ENCODE measurements at regions of chr14 and their contacts with region 1.

Region 1: DNA sequence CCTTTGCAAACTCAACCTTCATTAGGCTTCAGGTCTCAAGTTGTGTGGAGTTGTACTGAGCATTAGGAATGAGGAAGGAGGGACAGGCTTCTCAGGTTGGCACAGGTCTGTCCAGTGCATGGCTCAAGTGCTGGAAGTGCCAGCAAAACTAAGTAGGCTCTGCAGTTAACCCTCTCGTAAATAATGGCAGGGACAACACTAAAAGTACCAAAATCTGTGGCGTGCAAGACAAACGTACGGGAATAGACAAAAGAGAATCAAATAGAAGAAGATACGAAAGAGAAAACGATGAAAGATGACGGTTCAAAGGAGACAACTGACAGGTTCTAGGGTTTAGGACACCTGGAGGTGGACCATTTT is 612 bp downstream of the TRAPPC6B start:
- DNase-seq: no peak
- H3K4me3 Mint-ChIP-seq: peak overlapping the region; percentile 84
- H3K27ac Mint-ChIP-seq: peak overlapping the region; percentile 98
- H3K4me1 Mint-ChIP-seq: peaks cover 59% of the 10 kb centered on the region
- H3K27me3 Mint-ChIP-seq: no peaks in the 10 kb centered on the region

Region 2: DNA sequence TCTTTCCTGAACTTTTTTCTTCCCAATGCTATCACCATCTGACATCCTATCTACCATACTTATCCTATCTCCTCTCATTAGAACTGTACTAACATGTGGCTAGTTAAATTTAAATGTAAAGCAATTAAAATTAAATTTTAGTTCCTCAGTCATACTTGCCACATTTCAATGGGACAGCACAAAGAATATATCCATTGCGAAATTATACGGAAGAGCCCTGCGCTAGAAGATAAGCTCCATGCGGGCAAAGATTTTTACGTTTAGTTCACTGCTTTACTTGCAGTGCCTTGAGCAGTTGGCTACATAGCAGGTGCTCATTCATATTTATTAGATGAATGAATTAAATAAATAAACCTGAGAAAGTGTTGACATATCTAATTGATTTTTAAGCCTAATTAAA is 99.6 kb before region 1 on chr14:
- CTCF ChIA-PET with region 1: no interaction called
- POLR2A ChIA-PET with region 1: no interaction called
- DNase-seq: no peak
- H3K4me3 Mint-ChIP-seq: no peak overlapping the region
- H3K27ac Mint-ChIP-seq: no peak overlapping the region
- H3K4me1 Mint-ChIP-seq: peaks cover 1% of the 10 kb centered on the region
- H3K27me3 Mint-ChIP-seq: no peaks in the 10 kb centered on the region

Region 3: GRCh38 chr14:39102969-39103957 is 66.3 kb before region 1 on chr14 and contains the start of gene SEC23A:
- CTCF ChIA-PET with region 1: interaction called, 6 read pairs
- POLR2A ChIA-PET with region 1: interaction called, 38 read pairs
- DNase-seq: peak; percentile 88
- H3K4me3 Mint-ChIP-seq: peak within 1 kb of the TSS; percentile 97
- H3K27ac Mint-ChIP-seq: peak within 1 kb of the TSS; percentile 91
- H3K4me1 Mint-ChIP-seq: peaks cover 47% of the 10 kb centered on the region
- H3K27me3 Mint-ChIP-seq: no peaks in the 10 kb centered on the region
- total RNA-seq, gene SEC23A: 59.7 to 69.0 TPM

Region 4: DNA sequence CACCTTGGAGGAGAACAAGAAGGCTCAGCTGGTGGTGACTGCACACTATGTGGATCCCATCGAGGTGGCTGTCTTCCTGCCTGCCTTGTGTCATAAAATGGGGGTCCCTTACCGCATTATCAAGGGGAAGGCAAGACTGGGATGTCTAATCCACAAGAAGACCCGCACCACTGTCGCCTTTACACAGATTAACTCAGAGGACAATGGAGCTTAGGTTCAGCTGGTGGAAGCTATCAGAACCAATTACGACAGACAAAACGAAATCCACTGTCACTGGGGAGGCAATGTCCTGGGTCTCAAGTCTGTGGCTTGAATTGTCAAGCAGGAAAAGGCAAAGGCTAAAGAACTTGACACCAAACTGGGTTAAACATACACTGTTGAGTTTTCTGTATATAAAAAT is 12.0 kb before region 1 on chr14:
- CTCF ChIA-PET with region 1: no interaction called
- POLR2A ChIA-PET with region 1: interaction called, 13 read pairs
- DNase-seq: no peak
- H3K4me3 Mint-ChIP-seq: no peak overlapping the region
- H3K27ac Mint-ChIP-seq: no peak overlapping the region
- H3K4me1 Mint-ChIP-seq: peaks cover 15% of the 10 kb centered on the region
- H3K27me3 Mint-ChIP-seq: no peaks in the 10 kb centered on the region

Region 5: DNA sequence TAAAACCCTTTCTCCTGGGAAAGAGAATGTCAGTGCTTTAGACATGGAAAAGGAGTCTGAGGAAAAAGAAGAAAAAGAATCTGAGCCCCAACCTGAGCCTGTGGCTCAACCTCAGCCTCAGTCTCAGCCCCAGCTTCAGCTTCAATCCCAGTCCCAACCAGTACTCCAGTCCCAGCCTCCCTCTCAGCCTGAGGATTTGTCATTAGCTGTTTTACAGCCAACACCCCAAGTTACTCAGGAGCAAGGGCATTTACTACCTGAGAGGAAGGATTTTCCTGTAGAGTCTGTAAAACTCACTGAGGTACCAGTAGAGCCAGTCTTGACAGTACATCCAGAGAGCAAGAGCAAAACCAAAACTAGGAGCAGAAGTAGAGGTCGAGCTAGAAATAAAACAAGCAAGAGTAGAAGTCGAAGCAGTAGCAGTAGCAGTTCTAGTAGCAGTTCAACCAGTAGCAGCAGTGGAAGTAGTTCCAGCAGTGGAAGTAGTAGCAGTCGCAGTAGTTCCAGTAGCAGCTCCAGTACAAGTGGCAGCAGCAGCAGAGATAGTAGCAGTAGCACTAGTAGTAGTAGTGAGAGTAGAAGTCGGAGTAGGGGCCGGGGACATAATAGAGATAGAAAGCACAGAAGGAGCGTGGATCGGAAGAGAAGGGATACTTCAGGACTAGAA is 11.6 kb after region 1 on chr14:
- CTCF ChIA-PET with region 1: no interaction called
- POLR2A ChIA-PET with region 1: interaction called, 18 read pairs
- DNase-seq: no peak
- H3K4me3 Mint-ChIP-seq: no peak overlapping the region
- H3K27ac Mint-ChIP-seq: no peak overlapping the region
- H3K4me1 Mint-ChIP-seq: peaks cover 39% of the 10 kb centered on the region
- H3K27me3 Mint-ChIP-seq: no peaks in the 10 kb centered on the region

Region 6: GRCh38 chr14:39241637-39242036 is 72.1 kb after region 1 on chr14:
- CTCF ChIA-PET with region 1: no interaction called
- POLR2A ChIA-PET with region 1: no interaction called
- DNase-seq: no peak
- H3K4me3 Mint-ChIP-seq: no peak overlapping the region
- H3K27ac Mint-ChIP-seq: no peak overlapping the region
- H3K4me1 Mint-ChIP-seq: no peaks in the 10 kb centered on the region
- H3K27me3 Mint-ChIP-seq: no peaks in the 10 kb centered on the region

Region 7: DNA sequence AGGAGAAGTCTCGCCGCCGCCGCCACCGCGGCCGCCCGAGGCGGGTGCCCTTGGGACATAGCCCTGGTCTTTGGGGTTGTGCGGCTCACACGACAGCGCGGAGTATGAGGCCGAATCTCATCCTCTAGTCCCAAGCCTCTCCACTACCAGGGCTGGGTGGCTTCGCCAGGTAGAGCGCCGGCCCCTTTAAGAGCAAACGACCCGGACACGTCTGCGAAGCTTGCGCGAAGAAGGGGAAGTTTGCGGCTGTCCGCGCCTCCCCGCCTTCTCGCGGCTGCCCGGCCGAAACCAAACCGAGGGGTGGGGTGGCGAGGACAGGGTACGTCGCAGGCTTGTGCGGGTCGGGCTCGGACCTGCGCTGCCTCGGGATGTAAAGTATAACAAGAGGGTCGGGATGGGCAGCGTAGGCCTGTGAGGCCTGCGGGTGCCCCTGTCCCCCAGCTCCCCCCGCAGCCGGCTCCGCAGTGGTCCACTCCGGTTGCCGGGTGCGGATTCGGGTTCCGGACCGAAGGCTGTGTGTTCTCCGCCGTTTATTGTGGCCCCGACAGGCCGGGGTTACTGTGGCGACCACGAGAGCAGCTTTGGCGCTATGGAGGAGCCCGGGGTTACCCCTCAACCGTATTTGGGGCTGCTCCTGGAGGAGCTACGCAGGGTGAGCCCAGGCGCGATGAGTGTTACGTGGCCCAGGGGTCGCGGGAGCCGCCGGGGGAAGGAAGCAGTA is 97.5 kb after region 1 on chr14:
- CTCF ChIA-PET with region 1: interaction called, 5 read pairs
- POLR2A ChIA-PET with region 1: interaction called, 46 read pairs
- DNase-seq: peak; percentile 84
- H3K4me3 Mint-ChIP-seq: peak overlapping the region; percentile 73
- H3K27ac Mint-ChIP-seq: peak overlapping the region; percentile 94
- H3K4me1 Mint-ChIP-seq: peaks cover 50% of the 10 kb centered on the region
- H3K27me3 Mint-ChIP-seq: no peaks in the 10 kb centered on the region